Body of pancreas (tissue), 4 donors: ENCODE measurements at regions of chr15 and their contacts with region 1.

Region 1: DNA sequence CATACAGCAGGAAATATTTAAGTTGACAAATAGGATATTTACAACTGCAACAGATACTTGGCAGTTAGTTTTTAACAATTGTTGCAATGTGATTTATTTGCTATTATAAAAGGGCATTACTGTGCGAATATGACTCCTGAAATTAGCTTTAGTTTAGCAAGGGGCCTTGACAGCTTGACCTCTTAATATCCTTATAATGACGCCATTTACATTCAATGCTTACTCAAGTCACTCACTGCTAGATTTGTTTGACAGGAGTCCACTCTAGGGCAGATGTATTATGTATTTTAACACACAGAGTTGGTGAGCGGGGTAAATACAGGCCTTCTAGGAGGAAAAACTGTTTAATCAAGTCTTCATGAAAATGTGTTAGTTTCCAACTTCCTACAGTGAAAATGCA is 58.1 kb upstream of the C15orf61 start:
- DNase-seq: no peak
- ATAC-seq: no peak
- H3K4me3 ChIP-seq: no peak overlapping the region
- H3K27ac ChIP-seq: no peak overlapping the region
- H3K4me1 ChIP-seq: peaks cover under 1% of the 10 kb centered on the region
- H3K27me3 ChIP-seq: no peaks in the 10 kb centered on the region
- CTCF ChIP-seq: no peak
- POLR2A ChIP-seq: no peak

Region 2: GRCh38 chr15:67396114-67396513 is 66.8 kb before region 1 on chr15:
- intact Hi-C with region 1: no loop called
- DNase-seq: no peak
- ATAC-seq: no peak
- H3K4me3 ChIP-seq: no peak overlapping the region
- H3K27ac ChIP-seq: no peak overlapping the region
- H3K4me1 ChIP-seq: no peaks in the 10 kb centered on the region
- H3K27me3 ChIP-seq: no peaks in the 10 kb centered on the region
- CTCF ChIP-seq: no peak
- POLR2A ChIP-seq: no peak

Region 3: GRCh38 chr15:67833710-67834511 is 371.0 kb after region 1 on chr15:
- intact Hi-C with region 1: loop called (anchors 5 kb)
- DNase-seq: peak in 2 of 4 donors; percentile 40 to 52
- ATAC-seq: peak; percentile 37
- H3K4me3 ChIP-seq: no peak overlapping the region
- H3K27ac ChIP-seq: no peak overlapping the region
- H3K4me1 ChIP-seq: peaks cover 44% of the 10 kb centered on the region
- H3K27me3 ChIP-seq: peaks cover 0 to 51% of the 10 kb centered on the region in 2 donors
- CTCF ChIP-seq: peak; percentile 21 to 54 (median 40)
- POLR2A ChIP-seq: no peak